ENCODE measurements at regions of chr17 and their contacts with region 1.

Region 1: GRCh38 chr17:16913463-16913862 is 58.5 kb downstream of the TNFRSF13B start:
- DNase-seq: peak; percentile 16
- H3K4me3 Mint-ChIP-seq: no peak overlapping the region
- H3K27ac Mint-ChIP-seq: no peak overlapping the region
- H3K4me1 Mint-ChIP-seq: peaks cover 41% of the 10 kb centered on the region
- H3K27me3 Mint-ChIP-seq: peaks cover 29% of the 10 kb centered on the region

Region 2: DNA sequence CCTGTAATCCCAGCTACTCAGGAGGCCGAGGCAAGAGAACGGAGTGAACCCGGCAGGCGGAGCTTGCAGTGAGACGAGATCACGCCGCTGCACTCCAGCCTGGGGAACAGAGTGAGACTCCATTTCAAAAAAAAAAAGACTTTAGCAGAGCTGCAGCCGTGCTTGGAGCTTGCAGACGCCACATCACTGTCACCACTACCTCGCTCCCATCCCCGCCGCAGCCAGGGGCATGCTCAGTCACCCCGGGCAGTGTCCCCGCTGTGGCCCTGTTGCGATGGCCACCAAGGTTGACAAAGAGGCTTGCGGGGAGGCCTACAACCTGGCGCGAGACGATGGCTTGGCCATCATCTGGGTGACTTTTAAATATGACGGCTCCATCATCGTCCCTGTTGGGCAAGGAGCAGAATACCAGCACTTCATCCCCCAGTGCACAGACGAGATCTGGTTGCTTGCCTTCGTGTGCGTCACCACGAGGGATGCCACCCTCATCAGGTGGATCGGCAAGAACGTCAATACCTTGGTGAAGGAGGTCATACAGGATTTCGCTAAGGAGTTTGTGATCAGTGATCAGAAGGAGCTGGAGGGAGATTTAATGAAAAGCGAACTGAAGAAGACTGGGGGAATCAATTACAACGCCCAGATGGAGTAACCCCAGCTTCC is 59.7 kb before region 1 on chr17:
- CTCF ChIA-PET with region 1: no interaction called
- DNase-seq: no peak
- H3K4me3 Mint-ChIP-seq: no peak overlapping the region
- H3K27ac Mint-ChIP-seq: no peak overlapping the region
- H3K4me1 Mint-ChIP-seq: no peaks in the 10 kb centered on the region
- H3K27me3 Mint-ChIP-seq: peaks cover 11% of the 10 kb centered on the region

Region 3: DNA sequence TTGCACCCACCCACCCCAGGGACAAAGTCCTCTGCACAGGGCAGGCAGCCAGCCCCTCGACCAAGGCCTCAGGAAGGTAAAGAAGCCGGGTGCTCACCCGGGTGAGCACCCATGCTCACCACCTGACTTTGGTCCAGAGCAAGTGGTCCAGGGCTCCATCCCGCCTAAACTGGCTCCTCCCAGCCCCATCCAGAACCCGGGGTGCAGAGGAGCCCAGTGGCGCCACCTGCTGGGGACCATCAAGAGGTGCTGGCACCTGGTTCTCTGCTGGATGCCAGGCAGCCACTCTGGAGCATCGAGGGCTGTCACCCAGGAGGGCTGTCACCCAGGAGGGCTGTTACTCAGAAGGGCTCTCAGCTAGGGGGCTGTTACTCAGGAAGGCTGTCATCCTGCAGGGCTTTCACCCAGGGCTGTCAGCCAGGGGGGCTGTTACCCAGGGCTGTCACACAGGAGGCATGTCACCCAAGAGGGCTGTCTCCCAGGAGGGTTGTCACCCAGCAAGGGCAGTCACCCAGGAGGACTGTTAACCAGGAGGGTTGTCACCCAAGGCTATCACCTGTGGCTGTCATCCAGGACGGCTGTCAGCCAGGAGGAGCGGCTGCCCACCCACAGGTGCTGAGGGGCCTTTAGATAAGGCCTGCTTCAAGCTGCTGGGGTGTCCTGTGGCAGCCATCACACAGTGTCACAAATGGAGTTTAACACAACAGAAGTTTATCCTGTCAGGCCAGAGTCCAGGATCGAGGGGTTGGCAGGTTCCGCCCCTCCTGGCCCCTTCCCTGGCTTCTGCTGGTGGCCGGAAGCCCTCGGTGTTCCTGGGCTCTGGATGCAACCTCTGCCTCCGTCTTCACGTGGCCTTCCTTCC is 40.1 kb before region 1 on chr17:
- CTCF ChIA-PET with region 1: no interaction called
- DNase-seq: peak; percentile 59
- H3K4me3 Mint-ChIP-seq: no peak overlapping the region
- H3K27ac Mint-ChIP-seq: no peak overlapping the region
- H3K4me1 Mint-ChIP-seq: no peaks in the 10 kb centered on the region
- H3K27me3 Mint-ChIP-seq: peaks cover 19% of the 10 kb centered on the region

Region 4: DNA sequence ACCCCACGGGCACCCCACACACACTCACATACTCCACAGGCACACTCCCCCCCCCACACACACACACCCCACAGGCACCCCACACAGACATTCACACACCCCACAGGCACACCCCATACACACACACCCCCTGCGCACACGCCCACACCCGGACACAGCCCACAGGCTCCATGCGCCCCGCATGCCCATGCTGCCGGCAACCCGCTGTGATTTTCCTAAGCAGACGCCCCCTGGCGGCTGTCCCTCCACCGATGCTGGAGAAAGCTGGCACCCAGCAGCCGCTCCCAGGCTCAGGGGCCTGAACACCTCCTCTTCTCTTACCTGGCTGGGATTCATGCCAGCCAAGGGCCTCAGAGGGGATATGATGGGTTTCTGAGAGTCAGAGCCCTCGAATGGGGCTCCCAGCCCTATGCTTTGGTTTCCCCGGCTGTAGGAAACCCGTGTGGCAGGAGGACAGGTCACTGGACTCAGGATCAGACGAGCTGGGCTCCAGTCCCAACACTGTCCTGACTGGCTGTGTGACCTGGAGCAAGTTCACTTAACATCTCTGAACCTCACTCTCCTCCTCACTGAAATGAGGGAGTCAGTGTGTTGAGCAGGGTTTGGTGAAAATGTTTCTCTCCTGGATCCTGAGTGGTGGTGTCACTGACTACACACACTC is 78.0 kb after region 1 on chr17:
- CTCF ChIA-PET with region 1: interaction called, 10 read pairs
- DNase-seq: peak; percentile 86
- H3K4me3 Mint-ChIP-seq: no peak overlapping the region
- H3K27ac Mint-ChIP-seq: no peak overlapping the region
- H3K4me1 Mint-ChIP-seq: peaks cover 34% of the 10 kb centered on the region
- H3K27me3 Mint-ChIP-seq: peaks cover 16% of the 10 kb centered on the region